SK-N-SH (cell line): ENCODE measurements at regions of chr15 and their contacts with region 1.

Region 1: GRCh38 chr15:49169880-49170597 is at the start of gene GALK2:
- DNase-seq: peak; percentile 80
- H3K4me3 ChIP-seq: peak within 1 kb of the TSS; percentile 72 to 77
- H3K27ac ChIP-seq: peak within 1 kb of the TSS; percentile 42 to 73; a peak in 3 of 4 replicates
- H3K4me1 ChIP-seq: peaks cover 0 to 3% of the 10 kb centered on the region in 2 experiments; a peak in 1 of 4 replicates
- H3K27me3 ChIP-seq: no peaks in the 10 kb centered on the region
- CTCF ChIP-seq: no peak
- EP300 ChIP-seq: no peak
- RAD21 ChIP-seq: no peak
- polyA plus RNA-seq, gene GALK2: 19.0 TPM in 2 replicates

Region 2: DNA sequence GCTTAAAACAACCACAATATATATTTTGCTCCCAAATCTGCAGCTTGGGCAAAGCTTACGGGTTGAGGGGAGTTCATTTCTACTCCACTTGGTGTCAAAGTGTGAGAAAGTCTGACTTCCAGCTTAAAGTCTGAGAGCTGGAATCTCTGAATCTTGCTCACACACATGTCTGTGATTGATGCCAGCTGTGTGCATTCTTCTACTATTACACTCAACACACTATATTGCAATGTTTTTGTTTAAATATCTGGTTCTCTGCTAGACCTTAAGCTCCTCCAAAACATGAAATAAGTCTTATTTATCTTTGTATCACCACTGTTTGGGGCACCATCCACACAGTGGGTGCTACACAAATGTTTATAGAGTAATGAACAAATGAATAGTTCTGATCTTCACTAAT is 87.1 kb before region 1 on chr15:
- CTCF ChIA-PET with region 1: no interaction called
- POLR2A ChIA-PET with region 1: no interaction called
- DNase-seq: no peak
- H3K4me3 ChIP-seq: no peak overlapping the region
- H3K27ac ChIP-seq: peak overlapping the region in 1 of 2 experiments; percentile 75; a peak in 2 of 4 replicates
- H3K4me1 ChIP-seq: no peaks in the 10 kb centered on the region; a peak in 1 of 4 replicates
- H3K27me3 ChIP-seq: no peaks in the 10 kb centered on the region
- CTCF ChIP-seq: no peak
- EP300 ChIP-seq: no peak
- RAD21 ChIP-seq: no peak

Region 3: DNA sequence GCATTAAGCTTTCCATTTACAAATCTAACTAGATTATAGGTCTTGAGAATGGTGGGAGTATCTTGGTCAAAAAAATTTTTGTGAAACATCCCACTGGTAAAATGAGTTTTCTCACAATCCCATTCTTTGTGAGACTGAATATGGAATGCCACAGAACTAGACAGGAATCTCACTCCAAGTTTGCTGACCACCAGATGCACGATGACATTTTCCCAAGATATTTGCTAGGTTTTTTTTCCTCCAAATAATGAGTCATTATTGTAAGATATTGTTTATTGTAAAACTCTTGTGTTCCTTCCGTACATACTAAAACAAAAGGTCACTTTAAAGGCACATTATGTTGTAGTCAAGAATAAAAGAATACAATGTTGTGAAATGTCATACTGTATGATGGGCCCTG is 68.5 kb before region 1 on chr15:
- CTCF ChIA-PET with region 1: no interaction called
- POLR2A ChIA-PET with region 1: no interaction called
- DNase-seq: no peak
- H3K4me3 ChIP-seq: no peak overlapping the region
- H3K27ac ChIP-seq: no peak overlapping the region
- H3K4me1 ChIP-seq: no peaks in the 10 kb centered on the region
- H3K27me3 ChIP-seq: no peaks in the 10 kb centered on the region
- CTCF ChIP-seq: no peak
- EP300 ChIP-seq: no peak
- RAD21 ChIP-seq: no peak

Region 4: GRCh38 chr15:49155110-49155833 is 14.8 kb before region 1 on chr15 and contains the start of gene COPS2:
- CTCF ChIA-PET with region 1: interaction called, 5 read pairs
- POLR2A ChIA-PET with region 1: interaction called, 19 read pairs
- DNase-seq: peak; percentile 85
- H3K4me3 ChIP-seq: peak within 1 kb of the TSS; percentile 96 to 97
- H3K27ac ChIP-seq: peak within 1 kb of the TSS; percentile 75 to 90
- H3K4me1 ChIP-seq: peaks cover 4 to 7% of the 10 kb centered on the region in 2 experiments; a peak in 2 of 4 replicates
- H3K27me3 ChIP-seq: no peaks in the 10 kb centered on the region
- CTCF ChIP-seq: no peak
- EP300 ChIP-seq: peak in 1 of 2 experiments; percentile 51; a peak in 1 of 4 replicates
- RAD21 ChIP-seq: no peak; the same call in 1 of the 2 replicates
- polyA plus RNA-seq, gene COPS2: 21.3 and 27.7 TPM in 2 replicates